ENCODE measurements at regions of chr6 and their contacts with region 1.

Region 1: GRCh38 chr6:36851149-36851614 is 11.9 kb upstream of the CPNE5 start:
- DNase-seq: peak; percentile 81
- H3K4me3 ChIP-seq: no peak overlapping the region
- H3K27ac ChIP-seq: no peak overlapping the region
- H3K4me1 ChIP-seq: peaks cover 30% of the 10 kb centered on the region
- H3K27me3 ChIP-seq: no peaks in the 10 kb centered on the region
- CTCF ChIP-seq: peak; percentile 70 to 85
- POLR2A ChIP-seq: no peak

Region 2: DNA sequence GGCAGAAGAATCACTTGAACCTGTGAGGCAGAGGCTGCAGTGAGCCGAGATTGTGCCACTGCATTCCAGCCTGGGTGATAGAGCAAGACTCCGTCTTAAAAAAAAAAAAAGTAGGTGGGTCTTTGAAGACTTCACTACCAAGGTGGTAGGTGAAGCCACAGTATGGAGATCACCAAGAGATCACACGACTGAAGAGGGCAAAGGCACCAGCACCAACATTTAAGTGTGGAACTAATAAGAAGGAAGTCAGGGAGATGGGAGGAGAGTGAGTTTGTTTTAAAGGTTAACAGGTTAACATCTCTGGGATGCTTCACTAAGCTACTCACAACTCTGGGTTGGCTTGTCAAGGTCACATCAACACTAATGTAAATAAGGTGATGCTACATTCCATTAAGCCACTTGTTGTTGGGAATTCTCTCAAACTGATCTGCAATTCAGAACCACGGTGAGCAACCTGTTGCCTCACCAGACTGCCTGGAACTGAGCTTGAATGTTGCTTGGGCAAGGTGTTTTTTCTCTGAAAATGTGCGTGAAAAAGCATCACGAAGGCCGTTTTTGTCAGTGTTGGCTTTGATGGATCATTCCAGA is 359.7 kb before region 1 on chr6:
- CTCF ChIA-PET with region 1: no interaction called
- POLR2A ChIA-PET with region 1: no interaction called
- dilution Hi-C with region 1: no loop called
- intact Hi-C with region 1: no loop called
- DNase-seq: no peak
- H3K4me3 ChIP-seq: no peak overlapping the region
- H3K27ac ChIP-seq: no peak overlapping the region
- H3K4me1 ChIP-seq: no peaks in the 10 kb centered on the region
- H3K27me3 ChIP-seq: no peaks in the 10 kb centered on the region
- CTCF ChIP-seq: no peak
- POLR2A ChIP-seq: no peak

Region 3: GRCh38 chr6:36759148-36759759 is 91.9 kb before region 1 on chr6:
- CTCF ChIA-PET with region 1: interaction called, 552 read pairs
- POLR2A ChIA-PET with region 1: interaction called, 4 read pairs
- dilution Hi-C with region 1: no loop called
- intact Hi-C with region 1: no loop called
- DNase-seq: peak; percentile 85
- H3K4me3 ChIP-seq: no peak overlapping the region
- H3K27ac ChIP-seq: no peak overlapping the region
- H3K4me1 ChIP-seq: peaks cover 33% of the 10 kb centered on the region
- H3K27me3 ChIP-seq: no peaks in the 10 kb centered on the region
- CTCF ChIP-seq: peak; percentile 91 to 97
- POLR2A ChIP-seq: no peak

Region 4: GRCh38 chr6:36793913-36794712 is 57.1 kb before region 1 on chr6:
- CTCF ChIA-PET with region 1: interaction called, 552 read pairs
- POLR2A ChIA-PET with region 1: no interaction called
- dilution Hi-C with region 1: no loop called
- intact Hi-C with region 1: no loop called
- DNase-seq: no peak
- H3K4me3 ChIP-seq: no peak overlapping the region
- H3K27ac ChIP-seq: no peak overlapping the region
- H3K4me1 ChIP-seq: peaks cover under 1% of the 10 kb centered on the region
- H3K27me3 ChIP-seq: no peaks in the 10 kb centered on the region
- CTCF ChIP-seq: no peak
- POLR2A ChIP-seq: no peak

Region 5: GRCh38 chr6:36815962-36816735 is 35.0 kb before region 1 on chr6:
- CTCF ChIA-PET with region 1: interaction called, 95 read pairs
- POLR2A ChIA-PET with region 1: no interaction called
- dilution Hi-C with region 1: loop called (anchors 5 kb)
- intact Hi-C with region 1: loop called (anchors 1 kb)
- DNase-seq: no peak
- H3K4me3 ChIP-seq: no peak overlapping the region
- H3K27ac ChIP-seq: no peak overlapping the region
- H3K4me1 ChIP-seq: peaks cover 8% of the 10 kb centered on the region
- H3K27me3 ChIP-seq: no peaks in the 10 kb centered on the region
- CTCF ChIP-seq: no peak
- POLR2A ChIP-seq: no peak

Region 6: GRCh38 chr6:36865835-36866234 is 14.7 kb after region 1 on chr6:
- CTCF ChIA-PET with region 1: interaction called, 17 read pairs
- POLR2A ChIA-PET with region 1: no interaction called
- dilution Hi-C with region 1: no loop called
- intact Hi-C with region 1: no loop called
- DNase-seq: peak; percentile 45
- H3K4me3 ChIP-seq: no peak overlapping the region
- H3K27ac ChIP-seq: no peak overlapping the region
- H3K4me1 ChIP-seq: peaks cover 8% of the 10 kb centered on the region
- H3K27me3 ChIP-seq: no peaks in the 10 kb centered on the region
- CTCF ChIP-seq: no peak
- POLR2A ChIP-seq: no peak

Region 7: GRCh38 chr6:36979347-36979742 is 128.2 kb after region 1 on chr6:
- CTCF ChIA-PET with region 1: interaction called, 12 read pairs
- POLR2A ChIA-PET with region 1: no interaction called
- dilution Hi-C with region 1: no loop called
- intact Hi-C with region 1: loop called (anchors 1 kb)
- DNase-seq: peak; percentile 47
- H3K4me3 ChIP-seq: no peak overlapping the region
- H3K27ac ChIP-seq: no peak overlapping the region
- H3K4me1 ChIP-seq: peaks cover 18% of the 10 kb centered on the region
- H3K27me3 ChIP-seq: no peaks in the 10 kb centered on the region
- CTCF ChIP-seq: peak; percentile 43 to 53
- POLR2A ChIP-seq: no peak

Region 8: GRCh38 chr6:37005061-37005810 is 154.1 kb after region 1 on chr6 and contains the start of gene FGD2:
- CTCF ChIA-PET with region 1: no interaction called
- POLR2A ChIA-PET with region 1: no interaction called
- dilution Hi-C with region 1: no loop called
- intact Hi-C with region 1: no loop called
- DNase-seq: no peak
- H3K4me3 ChIP-seq: no peak within 1 kb of the TSS
- H3K27ac ChIP-seq: no peak within 1 kb of the TSS
- H3K4me1 ChIP-seq: no peaks in the 10 kb centered on the region
- H3K27me3 ChIP-seq: peaks cover 0 to 6% of the 10 kb centered on the region in 2 experiments
- CTCF ChIP-seq: no peak
- POLR2A ChIP-seq: no peak
- total RNA-seq, gene FGD2: not detected in 2 replicates